ENCODE measurements at regions of chr12 and their contacts with region 1.

Region 1: DNA sequence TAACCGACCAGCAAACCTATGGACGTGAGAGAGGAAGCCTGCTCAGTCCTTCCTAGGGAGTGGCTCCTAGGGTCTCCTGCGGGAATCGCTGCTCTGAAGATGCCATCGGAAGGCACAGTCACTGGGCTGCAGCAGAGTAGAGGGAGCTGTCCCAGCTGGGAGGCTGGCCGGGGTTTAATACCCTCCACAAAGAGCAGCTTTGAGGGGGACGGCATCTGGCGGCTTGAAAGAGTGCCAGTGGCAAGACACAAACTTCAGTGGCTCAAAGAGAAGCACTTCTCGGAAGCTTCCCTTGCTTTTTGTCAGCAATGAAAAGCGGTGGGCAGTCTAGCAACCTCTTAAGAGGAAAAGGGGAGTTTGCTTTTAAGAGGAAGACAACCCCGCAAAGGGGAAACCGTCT is 114.6 kb downstream of the TMEM132C start:
- DNase-seq: no peak
- H3K4me3 ChIP-seq: no peak overlapping the region
- H3K27ac ChIP-seq: no peak overlapping the region
- H3K4me1 ChIP-seq: peaks cover 0 to 3% (median 1%) of the 10 kb centered on the region in 4 experiments; a peak in 2 of 7 replicates
- H3K27me3 ChIP-seq: peaks cover 0 to 10% (median 6%) of the 10 kb centered on the region in 4 experiments; a peak in 4 of 7 replicates
- CTCF ChIP-seq: no peak
- EP300 ChIP-seq: no peak
- POLR2A ChIP-seq: no peak
- RAD21 ChIP-seq: no peak

Region 2: GRCh38 chr12:128276471-128276870 is 105.1 kb before region 1 on chr12:
- CTCF ChIA-PET with region 1: no interaction called
- POLR2A ChIA-PET with region 1: no interaction called
- DNase-seq: no peak
- H3K4me3 ChIP-seq: no peak overlapping the region
- H3K27ac ChIP-seq: no peak overlapping the region
- H3K4me1 ChIP-seq: no peaks in the 10 kb centered on the region
- H3K27me3 ChIP-seq: peaks cover 0 to 2% (median 0%) of the 10 kb centered on the region in 4 experiments; a peak in 1 of 7 replicates
- CTCF ChIP-seq: no peak
- EP300 ChIP-seq: no peak
- POLR2A ChIP-seq: no peak
- RAD21 ChIP-seq: no peak

Region 3: GRCh38 chr12:128365651-128366231 is 15.8 kb before region 1 on chr12:
- CTCF ChIA-PET with region 1: interaction called, 10 read pairs
- POLR2A ChIA-PET with region 1: interaction called, 3 read pairs
- DNase-seq: peak in 1 of 2 experiments; percentile 54
- H3K4me3 ChIP-seq: peak overlapping the region; percentile 33 to 57 (median 46); a peak in 7 of 8 replicates
- H3K27ac ChIP-seq: no peak overlapping the region
- H3K4me1 ChIP-seq: peaks cover 2 to 8% (median 4%) of the 10 kb centered on the region in 4 experiments; a peak in 6 of 7 replicates
- H3K27me3 ChIP-seq: peaks cover 0 to 26% (median 19%) of the 10 kb centered on the region in 4 experiments; a peak in 6 of 7 replicates
- CTCF ChIP-seq: no peak
- EP300 ChIP-seq: no peak
- POLR2A ChIP-seq: no peak
- RAD21 ChIP-seq: no peak